ENCODE measurements at regions of chr1 and their contacts with region 1.

Region 1: DNA sequence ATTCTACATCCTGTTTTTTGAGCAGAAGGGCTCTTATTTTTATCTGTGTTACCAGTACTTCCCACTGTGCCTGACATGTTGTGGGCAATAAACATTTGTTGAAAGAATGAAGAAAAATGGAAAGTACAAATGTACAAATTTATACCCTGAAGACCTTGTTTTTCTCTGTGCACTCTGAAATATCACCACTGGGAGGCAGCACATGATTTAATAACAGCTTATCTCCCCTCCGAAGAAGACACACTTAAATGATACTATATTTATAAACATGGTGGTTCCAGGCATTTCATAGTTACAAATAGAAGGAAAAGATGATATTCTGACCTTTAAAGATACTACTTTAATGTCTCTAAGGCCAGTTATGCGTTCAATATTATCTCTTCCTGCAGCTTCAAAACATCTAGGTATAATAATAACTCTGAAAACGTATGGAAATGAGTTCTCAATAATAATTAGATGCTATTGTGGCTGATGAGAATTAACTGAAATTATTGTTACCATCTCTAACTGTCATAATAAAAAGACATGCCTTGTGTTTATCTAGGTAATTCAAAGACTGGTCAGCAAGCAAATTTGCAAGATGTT is 12.8 kb downstream of the DYNLT5 start:
- DNase-seq: peak in 2 of 5 donors; percentile 25 to 47
- H3K4me3 ChIP-seq: no peak overlapping the region
- H3K27ac ChIP-seq: no peak overlapping the region
- H3K4me1 ChIP-seq: no peaks in the 10 kb centered on the region
- H3K27me3 ChIP-seq: no peaks in the 10 kb centered on the region
- CTCF ChIP-seq: peak; percentile 50 to 69 (median 51)
- EP300 ChIP-seq: no peak
- POLR2A ChIP-seq: no peak

Region 2: DNA sequence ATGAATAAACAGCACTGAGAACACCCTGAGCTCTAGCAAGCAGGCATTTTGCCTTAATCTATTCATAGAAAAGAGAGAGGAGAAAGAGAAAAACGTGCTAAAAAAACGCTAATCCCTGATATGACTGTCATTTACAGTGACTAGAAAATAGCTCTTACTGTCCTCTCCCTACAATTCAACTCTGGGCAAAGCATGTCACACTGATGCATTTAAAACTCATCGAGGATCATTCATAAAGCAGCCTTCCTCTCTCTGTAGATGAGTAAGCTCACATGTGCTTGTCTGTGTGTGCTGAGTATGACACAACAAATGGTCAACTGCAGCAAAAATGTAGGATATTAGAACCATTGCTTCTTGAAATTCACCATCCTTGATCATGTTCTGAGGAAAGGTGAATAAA is 122.1 kb before region 1 on chr1:
- intact Hi-C with region 1: no loop called
- DNase-seq: no peak
- H3K4me3 ChIP-seq: no peak overlapping the region
- H3K27ac ChIP-seq: no peak overlapping the region
- H3K4me1 ChIP-seq: no peaks in the 10 kb centered on the region
- H3K27me3 ChIP-seq: no peaks in the 10 kb centered on the region
- CTCF ChIP-seq: no peak
- EP300 ChIP-seq: no peak
- POLR2A ChIP-seq: no peak

Region 3: GRCh38 chr1:67149179-67149770 is 384.2 kb after region 1 on chr1:
- intact Hi-C with region 1: loop called in 3 of 4 experiments (anchors 5 to 10 kb)
- DNase-seq: peak; percentile 49 to 66 (median 58)
- H3K4me3 ChIP-seq: no peak overlapping the region
- H3K27ac ChIP-seq: no peak overlapping the region
- H3K4me1 ChIP-seq: no peaks in the 10 kb centered on the region
- H3K27me3 ChIP-seq: no peaks in the 10 kb centered on the region
- CTCF ChIP-seq: peak; percentile 47 to 73 (median 70)
- EP300 ChIP-seq: no peak
- POLR2A ChIP-seq: no peak

Region 4: DNA sequence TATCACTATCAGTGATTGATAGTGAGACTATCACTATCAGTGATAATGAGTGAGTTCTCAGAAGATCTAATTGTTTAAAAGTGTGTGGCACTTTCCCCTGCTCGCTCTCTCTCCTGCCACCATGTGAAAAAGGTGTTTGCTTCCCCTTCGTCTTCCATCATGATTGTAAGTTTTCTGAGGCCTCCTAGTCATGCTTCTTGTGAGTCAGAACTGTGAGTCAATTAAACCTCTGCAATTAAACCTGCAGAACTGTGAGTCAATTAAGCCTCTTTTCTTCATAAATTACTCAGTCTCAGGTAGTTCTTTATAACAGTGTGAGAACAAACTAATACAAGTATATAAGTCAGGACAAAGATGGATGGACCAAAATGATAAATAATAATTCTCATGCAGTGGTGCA is 394.1 kb after region 1 on chr1:
- intact Hi-C with region 1: loop called in 1 of 4 experiments (anchors 10 kb)
- DNase-seq: no peak
- H3K4me3 ChIP-seq: no peak overlapping the region
- H3K27ac ChIP-seq: no peak overlapping the region
- H3K4me1 ChIP-seq: no peaks in the 10 kb centered on the region
- H3K27me3 ChIP-seq: no peaks in the 10 kb centered on the region
- CTCF ChIP-seq: no peak
- EP300 ChIP-seq: no peak
- POLR2A ChIP-seq: no peak

Region 5: DNA sequence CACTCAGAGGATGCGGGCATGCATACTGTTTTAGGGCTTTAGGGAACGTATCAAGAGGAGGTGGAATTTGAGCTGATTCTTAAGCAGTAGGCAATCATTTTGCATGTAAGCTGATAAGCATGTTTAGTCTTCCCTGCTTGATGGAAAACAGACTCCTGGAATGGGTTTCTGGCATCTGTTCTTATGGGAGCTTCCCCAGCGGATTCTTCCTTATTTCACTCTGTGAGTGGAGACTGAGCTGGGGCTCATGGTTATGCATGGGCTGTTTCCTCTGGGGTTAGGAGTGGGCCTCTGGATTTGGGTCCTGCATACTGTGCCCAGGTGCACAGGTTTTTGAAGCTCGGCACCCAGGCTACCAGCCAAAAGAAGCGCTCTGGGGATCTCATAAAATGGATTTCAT is 1192.0 kb after region 1 on chr1:
- intact Hi-C with region 1: no loop called
- DNase-seq: peak in 4 of 5 donors; percentile 41 to 57 (median 46)
- H3K4me3 ChIP-seq: no peak overlapping the region
- H3K27ac ChIP-seq: no peak overlapping the region
- H3K4me1 ChIP-seq: peaks cover 14% of the 10 kb centered on the region
- H3K27me3 ChIP-seq: no peaks in the 10 kb centered on the region
- CTCF ChIP-seq: no peak
- EP300 ChIP-seq: no peak
- POLR2A ChIP-seq: no peak

Measured in ovary (tissue), 10 donors.